ENCODE measurements at regions of chr11 and their contacts with region 1.

Region 1: GRCh38 chr11:12182676-12183541 is 72.5 kb downstream of the MICAL2 start:
- DNase-seq: peak in 4 of 5 donors; percentile 71 to 79 (median 72)
- ATAC-seq: peak; percentile 76 to 84 (median 82)
- H3K4me3 ChIP-seq: no peak overlapping the region
- H3K27ac ChIP-seq: peak overlapping the region; percentile 46 to 84 (median 74)
- H3K4me1 ChIP-seq: peaks cover 10 to 90% (median 64%) of the 10 kb centered on the region in 12 donors
- H3K27me3 ChIP-seq: no peaks in the 10 kb centered on the region
- CTCF ChIP-seq: no peak
- POLR2A ChIP-seq: no peak

Region 2: GRCh38 chr11:12122083-12122482 is 60.8 kb before region 1 on chr11:
- intact Hi-C with region 1: no loop called
- DNase-seq: no peak
- ATAC-seq: peak in 1 of 4 donors; percentile 29
- H3K4me3 ChIP-seq: no peak overlapping the region
- H3K27ac ChIP-seq: no peak overlapping the region
- H3K4me1 ChIP-seq: peaks cover 3 to 88% (median 68%) of the 10 kb centered on the region in 12 donors
- H3K27me3 ChIP-seq: no peaks in the 10 kb centered on the region
- CTCF ChIP-seq: peak in 11 of 12 donors; percentile 9 to 41 (median 33)
- POLR2A ChIP-seq: no peak

Region 3: GRCh38 chr11:12216671-12217374 is 33.9 kb after region 1 on chr11:
- intact Hi-C with region 1: loop called in 2 of 10 experiments (anchors 5 kb)
- DNase-seq: peak in 1 of 5 donors; percentile 52
- ATAC-seq: peak in 2 of 4 donors; percentile 13 to 30
- H3K4me3 ChIP-seq: no peak overlapping the region
- H3K27ac ChIP-seq: peak overlapping the region in 9 of 12 donors; percentile 2 to 79 (median 43)
- H3K4me1 ChIP-seq: peaks cover 6 to 59% (median 37%) of the 10 kb centered on the region in 12 donors
- H3K27me3 ChIP-seq: no peaks in the 10 kb centered on the region
- CTCF ChIP-seq: no peak
- POLR2A ChIP-seq: no peak

Region 4: DNA sequence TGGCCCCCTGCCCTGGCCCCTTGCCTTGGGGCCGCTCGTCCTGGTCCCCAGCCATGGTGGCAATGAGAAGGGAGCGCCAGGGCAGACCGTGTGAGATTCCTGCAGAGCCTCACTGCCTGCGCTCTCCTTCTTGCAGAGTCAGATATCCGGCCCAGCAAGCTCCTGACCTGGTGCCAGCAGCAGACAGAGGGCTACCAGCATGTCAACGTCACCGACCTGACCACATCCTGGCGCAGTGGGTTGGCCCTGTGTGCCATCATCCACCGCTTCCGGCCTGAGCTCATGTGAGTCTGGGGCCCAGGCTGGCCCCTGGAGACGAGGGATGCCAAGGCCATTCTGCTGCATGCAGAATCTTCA is 41.6 kb after region 1 on chr11:
- intact Hi-C with region 1: loop called in 2 of 10 experiments (anchors 5 kb)
- DNase-seq: peak; percentile 80 to 90 (median 84)
- ATAC-seq: peak in 3 of 4 donors; percentile 44 to 65 (median 63)
- H3K4me3 ChIP-seq: peak overlapping the region in 1 of 12 donors; percentile 25
- H3K27ac ChIP-seq: peak overlapping the region in 10 of 12 donors; percentile 10 to 86 (median 46)
- H3K4me1 ChIP-seq: peaks cover 7 to 59% (median 38%) of the 10 kb centered on the region in 12 donors
- H3K27me3 ChIP-seq: no peaks in the 10 kb centered on the region
- CTCF ChIP-seq: no peak
- POLR2A ChIP-seq: no peak